CD4-positive, alpha-beta memory T cell (primary cell): ENCODE measurements at regions of chr19 and their contacts with region 1.

Region 1: GRCh38 chr19:4638828-4639530 is at the start of gene TNFAIP8L1:
- DNase-seq: peak; percentile 98 to 100 (median 99)
- H3K4me3 ChIP-seq: peak within 1 kb of the TSS; percentile 90 to 94
- H3K4me3 Mint-ChIP-seq: peak within 1 kb of the TSS; percentile 95 to 98 (median 97)
- H3K27ac ChIP-seq: peak within 1 kb of the TSS; percentile 83
- H3K27ac Mint-ChIP-seq: peak within 1 kb of the TSS; percentile 94 to 99 (median 99)
- H3K4me1 ChIP-seq: peaks cover 40% of the 10 kb centered on the region
- H3K4me1 Mint-ChIP-seq: peaks cover 8 to 41% (median 27%) of the 10 kb centered on the region in 4 donors
- H3K27me3 ChIP-seq: no peaks in the 10 kb centered on the region
- H3K27me3 Mint-ChIP-seq: no peaks in the 10 kb centered on the region
- total RNA-seq, gene TNFAIP8L1: 16.2 to 17.2 TPM

Region 2: DNA sequence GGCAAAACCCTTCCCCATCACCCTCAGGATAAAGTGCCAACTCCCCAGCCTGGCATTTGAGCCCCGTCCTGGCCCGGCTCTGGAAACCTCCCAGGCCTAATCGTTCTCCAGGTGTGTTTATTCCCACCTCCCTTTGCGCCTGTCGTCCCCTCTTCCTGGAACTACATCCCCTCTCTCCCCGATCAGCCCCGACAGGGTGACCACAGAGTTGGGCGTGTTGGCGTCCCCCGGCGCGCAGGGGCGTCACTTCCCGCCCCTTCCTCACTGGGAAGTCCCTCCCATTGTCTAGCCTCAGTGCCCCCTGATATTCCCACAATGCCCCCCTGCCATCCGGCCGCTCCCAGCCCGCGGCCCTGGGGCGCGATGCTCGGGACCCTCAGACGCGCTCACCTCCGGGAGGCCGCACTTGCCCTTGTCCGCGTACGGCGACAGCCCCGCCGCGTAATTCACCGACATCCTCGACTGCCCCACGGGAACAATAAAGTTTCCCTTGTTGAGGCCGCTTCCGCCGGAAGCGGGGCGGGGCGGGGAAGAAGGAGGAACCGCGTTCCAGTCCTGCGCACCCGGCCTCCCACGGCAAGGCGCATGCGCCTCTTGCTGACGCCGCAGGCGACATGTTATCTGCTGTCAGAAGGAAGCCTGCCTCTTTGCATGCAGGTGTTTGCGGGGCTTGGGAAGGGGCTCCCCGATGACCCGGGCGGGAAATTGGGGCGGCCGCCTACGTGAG is 456.7 kb before region 1 on chr19 and contains the starts of genes ANKRD24 and SIRT6:
- CTCF ChIA-PET with region 1: no interaction called
- POLR2A ChIA-PET with region 1: no interaction called
- intact Hi-C with region 1: loop called (anchors 5 kb)
- DNase-seq: peak; percentile 95 to 96 (median 96)
- H3K4me3 ChIP-seq: peak within 1 kb of the TSS; percentile 91 to 97
- H3K4me3 Mint-ChIP-seq: peak within 1 kb of the TSS; percentile 94 to 99 (median 96)
- H3K27ac ChIP-seq: peak within 1 kb of the TSS; percentile 81
- H3K27ac Mint-ChIP-seq: peak within 1 kb of the TSS; percentile 92 to 100 (median 96)
- H3K4me1 ChIP-seq: peaks cover 27% of the 10 kb centered on the region
- H3K4me1 Mint-ChIP-seq: peaks cover 30 to 41% (median 33%) of the 10 kb centered on the region in 4 donors
- H3K27me3 ChIP-seq: no peaks in the 10 kb centered on the region
- H3K27me3 Mint-ChIP-seq: peaks cover 0 to 3% of the 10 kb centered on the region in 2 donors
- total RNA-seq, gene ANKRD24: 1.9 to 2.9 TPM
- total RNA-seq, gene SIRT6: 26.8 to 27.0 TPM

Region 3: GRCh38 chr19:4471403-4472173 is 167.4 kb before region 1 on chr19:
- CTCF ChIA-PET with region 1: interaction called, 5 read pairs
- POLR2A ChIA-PET with region 1: interaction called, 3 read pairs
- intact Hi-C with region 1: loop called (anchors 1 kb)
- DNase-seq: peak; percentile 96 to 100 (median 99)
- H3K4me3 ChIP-seq: peak overlapping the region; percentile 27 to 68
- H3K4me3 Mint-ChIP-seq: no peak overlapping the region
- H3K27ac ChIP-seq: peak overlapping the region; percentile 74
- H3K27ac Mint-ChIP-seq: no peak overlapping the region
- H3K4me1 ChIP-seq: peaks cover 30% of the 10 kb centered on the region
- H3K4me1 Mint-ChIP-seq: peaks cover 9 to 26% (median 16%) of the 10 kb centered on the region in 4 donors
- H3K27me3 ChIP-seq: no peaks in the 10 kb centered on the region
- H3K27me3 Mint-ChIP-seq: no peaks in the 10 kb centered on the region

Region 4: DNA sequence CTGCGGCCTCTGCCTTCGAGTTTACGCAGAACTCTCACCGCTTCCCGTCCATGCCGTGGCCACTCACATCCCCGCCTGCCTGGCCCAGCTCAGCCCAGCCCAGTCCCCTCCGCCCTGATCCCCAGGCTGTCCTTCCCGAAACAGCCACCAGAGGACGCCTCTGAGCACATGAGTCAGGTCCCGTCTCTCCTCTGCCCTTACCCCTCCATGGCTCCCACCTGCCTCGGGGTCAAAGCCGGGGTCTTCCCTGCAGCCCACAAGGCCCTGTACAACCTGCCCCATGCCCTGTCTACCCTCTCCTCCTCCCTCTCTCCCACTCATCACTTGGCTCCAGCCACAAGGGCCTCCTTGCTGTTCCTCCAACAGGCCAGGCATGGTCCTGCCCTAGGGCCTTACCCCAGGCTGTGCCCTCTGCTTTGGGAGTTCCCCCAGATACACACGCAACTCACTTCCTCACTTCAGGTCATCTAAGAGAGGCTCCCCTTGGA is 71.4 kb before region 1 on chr19:
- CTCF ChIA-PET with region 1: interaction called, 44 read pairs
- POLR2A ChIA-PET with region 1: no interaction called
- intact Hi-C with region 1: loop called (anchors 1 kb)
- DNase-seq: peak in 4 of 5 donors; percentile 32 to 48 (median 44)
- H3K4me3 ChIP-seq: no peak overlapping the region
- H3K4me3 Mint-ChIP-seq: no peak overlapping the region
- H3K27ac ChIP-seq: no peak overlapping the region
- H3K27ac Mint-ChIP-seq: peak overlapping the region in 1 of 7 donors; percentile 51
- H3K4me1 ChIP-seq: no peaks in the 10 kb centered on the region
- H3K4me1 Mint-ChIP-seq: no peaks in the 10 kb centered on the region
- H3K27me3 ChIP-seq: no peaks in the 10 kb centered on the region
- H3K27me3 Mint-ChIP-seq: peaks cover 4 to 6% of the 10 kb centered on the region in 2 donors

Region 5: DNA sequence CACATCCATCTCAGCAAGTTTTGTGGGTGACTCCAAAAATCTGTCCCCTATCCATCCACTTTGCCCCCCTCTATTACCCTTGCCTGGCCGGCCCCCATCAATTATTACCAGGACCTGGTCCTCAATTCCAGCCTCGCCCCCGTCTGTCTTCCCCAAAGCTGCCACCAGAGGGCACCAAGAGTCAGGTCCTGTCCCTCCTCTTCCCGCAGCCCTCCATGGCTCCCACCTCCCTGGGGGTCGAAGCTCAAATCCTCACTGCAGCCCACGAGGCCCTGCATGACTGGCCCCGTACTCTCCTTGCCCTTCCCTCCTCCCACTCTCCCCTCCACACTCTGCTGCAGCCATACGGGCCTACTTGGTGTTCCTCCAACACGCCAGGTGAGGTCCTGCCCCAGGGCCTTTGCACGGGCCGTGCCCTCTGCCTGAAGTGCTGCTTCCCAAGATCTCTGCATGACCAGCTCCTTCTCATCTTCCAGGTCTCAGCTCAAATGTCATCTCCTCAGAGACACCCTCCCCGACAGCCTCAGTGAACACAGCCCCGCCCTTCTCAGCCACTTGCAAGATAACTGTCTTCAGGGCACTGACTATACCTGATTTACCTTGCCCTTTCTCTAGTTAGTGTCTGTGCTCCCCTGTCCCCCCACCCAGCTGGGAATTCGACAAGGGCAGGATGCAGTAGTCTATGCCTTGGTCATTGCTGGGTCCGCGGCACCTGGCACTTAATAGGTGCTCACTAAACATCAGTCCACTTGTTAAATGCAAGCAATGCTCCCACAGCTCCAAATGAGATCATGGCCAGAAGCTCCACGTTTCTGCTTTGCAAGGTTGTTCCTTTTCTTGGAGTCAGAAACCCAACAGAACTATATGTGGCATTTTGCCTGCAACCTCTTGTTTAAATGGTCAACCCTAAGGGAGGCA is 62.7 kb before region 1 on chr19:
- CTCF ChIA-PET with region 1: interaction called, 57 read pairs
- POLR2A ChIA-PET with region 1: no interaction called
- intact Hi-C with region 1: loop called (anchors 1 kb)
- DNase-seq: peak; percentile 42 to 65 (median 52)
- H3K4me3 ChIP-seq: no peak overlapping the region
- H3K4me3 Mint-ChIP-seq: no peak overlapping the region
- H3K27ac ChIP-seq: no peak overlapping the region
- H3K27ac Mint-ChIP-seq: peak overlapping the region in 1 of 7 donors; percentile 66
- H3K4me1 ChIP-seq: no peaks in the 10 kb centered on the region
- H3K4me1 Mint-ChIP-seq: peaks cover 0 to 1% (median under 1%) of the 10 kb centered on the region in 4 donors
- H3K27me3 ChIP-seq: peaks cover 5% of the 10 kb centered on the region
- H3K27me3 Mint-ChIP-seq: peaks cover 20 to 32% of the 10 kb centered on the region in 2 donors

Region 6: DNA sequence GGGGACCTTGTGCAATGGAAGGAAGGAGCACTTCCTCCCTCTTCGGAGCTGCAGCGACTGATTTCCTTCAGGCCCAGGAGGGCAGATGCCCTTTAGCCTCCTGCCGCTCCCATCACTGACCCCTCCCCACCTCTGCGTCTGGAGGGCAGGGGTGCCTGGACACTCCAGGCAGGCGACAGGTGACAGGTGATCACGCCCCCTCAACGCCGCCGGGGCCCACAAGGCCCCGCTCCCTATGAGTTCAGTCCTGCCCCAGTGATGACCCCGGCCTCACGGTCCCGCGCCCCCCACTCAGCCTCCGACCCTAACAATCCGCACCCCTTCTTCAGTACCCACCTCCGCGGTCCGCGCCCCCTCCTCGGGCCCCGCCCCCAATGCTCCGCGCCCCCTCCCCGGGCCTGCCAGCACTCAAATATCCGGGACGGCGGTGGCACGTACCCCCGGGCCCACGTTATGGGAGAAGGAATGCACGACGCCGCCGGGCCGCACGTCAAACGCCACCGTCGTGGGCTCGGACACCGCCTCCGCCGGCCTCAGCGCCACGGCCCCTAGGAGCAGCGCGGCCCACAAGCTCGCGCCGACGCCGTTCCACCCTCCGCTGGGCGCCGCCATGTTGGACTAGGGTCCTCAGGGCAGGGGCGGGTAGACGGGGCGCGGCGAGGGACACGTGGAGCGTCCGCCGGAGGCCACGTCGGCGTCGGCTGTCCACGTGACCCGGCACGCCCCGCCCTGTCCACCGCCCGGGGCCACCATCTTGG is 30.9 kb after region 1 on chr19 and contains the start of gene MYDGF:
- CTCF ChIA-PET with region 1: interaction called, 10 read pairs
- POLR2A ChIA-PET with region 1: interaction called, 11 read pairs
- intact Hi-C with region 1: loop called (anchors 1 kb)
- DNase-seq: peak; percentile 90 to 94 (median 91)
- H3K4me3 ChIP-seq: peak within 1 kb of the TSS; percentile 49 to 79
- H3K4me3 Mint-ChIP-seq: peak within 1 kb of the TSS; percentile 87 to 91 (median 90)
- H3K27ac ChIP-seq: peak within 1 kb of the TSS; percentile 79
- H3K27ac Mint-ChIP-seq: peak within 1 kb of the TSS; percentile 76 to 93 (median 90)
- H3K4me1 ChIP-seq: peaks cover 16% of the 10 kb centered on the region
- H3K4me1 Mint-ChIP-seq: peaks cover 7 to 23% (median 13%) of the 10 kb centered on the region in 4 donors
- H3K27me3 ChIP-seq: no peaks in the 10 kb centered on the region
- H3K27me3 Mint-ChIP-seq: no peaks in the 10 kb centered on the region
- total RNA-seq, gene MYDGF: 43.0 to 46.4 TPM

Region 7: GRCh38 chr19:4723367-4724187 is 84.6 kb after region 1 on chr19 and contains the start of gene DPP9:
- CTCF ChIA-PET with region 1: interaction called, 7 read pairs
- POLR2A ChIA-PET with region 1: interaction called, 3 read pairs
- intact Hi-C with region 1: loop called (anchors 1 kb)
- DNase-seq: peak; percentile 98 to 99 (median 99)
- H3K4me3 ChIP-seq: peak within 1 kb of the TSS; percentile 89 to 96
- H3K4me3 Mint-ChIP-seq: peak within 1 kb of the TSS; percentile 90 to 97 (median 93)
- H3K27ac ChIP-seq: peak within 1 kb of the TSS; percentile 86
- H3K27ac Mint-ChIP-seq: peak within 1 kb of the TSS; percentile 95 to 100 (median 98)
- H3K4me1 ChIP-seq: peaks cover 36% of the 10 kb centered on the region
- H3K4me1 Mint-ChIP-seq: peaks cover 15 to 47% (median 31%) of the 10 kb centered on the region in 4 donors
- H3K27me3 ChIP-seq: no peaks in the 10 kb centered on the region
- H3K27me3 Mint-ChIP-seq: peaks cover 4 to 10% of the 10 kb centered on the region in 2 donors
- total RNA-seq, gene DPP9: 86.9 to 93.9 TPM